ENCODE measurements at regions of chr15 and their contacts with region 1.

Region 1: GRCh38 chr15:70140543-70141375 is 43.0 kb upstream of the TLE3 start:
- DNase-seq: no peak
- ATAC-seq: peak; percentile 88
- H3K4me3 ChIP-seq: peak overlapping the region; percentile 55
- H3K27ac ChIP-seq: peak overlapping the region; percentile 78
- H3K4me1 ChIP-seq: peaks cover 28% of the 10 kb centered on the region
- H3K27me3 ChIP-seq: no peaks in the 10 kb centered on the region
- CTCF ChIP-seq: no peak
- EP300 ChIP-seq: peak in 1 of 2 experiments; percentile 37; a peak in 1 of 4 replicates
- POLR2A ChIP-seq: no peak
- RAD21 ChIP-seq: no peak

Region 2: DNA sequence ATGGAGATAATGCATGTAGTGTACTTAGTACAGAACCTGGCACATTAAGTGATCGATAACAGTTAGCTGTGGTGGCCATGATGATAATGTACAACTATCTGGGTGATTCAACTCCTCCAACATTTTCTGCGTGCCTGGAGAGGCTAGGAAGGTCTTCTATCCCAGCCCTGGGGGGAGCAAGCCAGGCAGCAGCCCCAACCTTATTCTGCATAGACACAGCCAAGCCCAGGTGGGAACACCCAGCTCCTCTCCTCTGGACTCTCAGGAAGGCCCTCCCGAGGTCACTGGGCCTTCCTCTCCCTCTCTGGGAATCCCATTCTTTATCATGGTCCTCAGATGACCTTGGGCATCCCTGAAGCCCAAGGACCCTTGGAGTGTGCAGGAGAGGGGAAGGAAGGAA is 37.9 kb before region 1 on chr15:
- CTCF ChIA-PET with region 1: interaction called, 6 read pairs
- POLR2A ChIA-PET with region 1: interaction called, 10 read pairs
- RAD21 ChIA-PET with region 1: interaction called, 34 read pairs
- SMC1A ChIA-PET with region 1: interaction called, 8 read pairs
- in situ Hi-C with region 1: no loop called
- intact Hi-C with region 1: loop called (anchors 5 kb)
- DNase-seq: no peak
- ATAC-seq: no peak
- H3K4me3 ChIP-seq: no peak overlapping the region
- H3K27ac ChIP-seq: no peak overlapping the region
- H3K4me1 ChIP-seq: peaks cover 24% of the 10 kb centered on the region
- H3K27me3 ChIP-seq: peaks cover 3 to 14% of the 10 kb centered on the region in 2 experiments; a peak in 3 of 4 replicates
- CTCF ChIP-seq: no peak
- EP300 ChIP-seq: no peak
- POLR2A ChIP-seq: no peak
- RAD21 ChIP-seq: no peak

Region 3: GRCh38 chr15:70121624-70122297 is 19.0 kb before region 1 on chr15:
- CTCF ChIA-PET with region 1: interaction called, 3 read pairs
- POLR2A ChIA-PET with region 1: interaction called, 14 read pairs
- RAD21 ChIA-PET with region 1: interaction called, 51 read pairs
- SMC1A ChIA-PET with region 1: interaction called, 30 read pairs
- in situ Hi-C with region 1: no loop called
- intact Hi-C with region 1: no loop called
- DNase-seq: no peak
- ATAC-seq: no peak
- H3K4me3 ChIP-seq: no peak overlapping the region
- H3K27ac ChIP-seq: no peak overlapping the region
- H3K4me1 ChIP-seq: peaks cover 5% of the 10 kb centered on the region; the same call in 1 of the 2 replicates
- H3K27me3 ChIP-seq: no peaks in the 10 kb centered on the region
- CTCF ChIP-seq: 0 out of 6 replicates have a peak, but pooled peaks of 2 of the 3 experiments have one; percentile 5 to 9
- EP300 ChIP-seq: no peak
- POLR2A ChIP-seq: no peak
- RAD21 ChIP-seq: 0 out of 2 replicates have a peak, but pooled peaks have one; percentile 22

Region 4: GRCh38 chr15:70127288-70127746 is 13.4 kb before region 1 on chr15:
- CTCF ChIA-PET with region 1: interaction called, 5 read pairs
- POLR2A ChIA-PET with region 1: interaction called, 14 read pairs
- RAD21 ChIA-PET with region 1: interaction called, 51 read pairs
- SMC1A ChIA-PET with region 1: interaction called, 30 read pairs
- in situ Hi-C with region 1: no loop called
- intact Hi-C with region 1: no loop called
- DNase-seq: no peak
- ATAC-seq: peak; percentile 19
- H3K4me3 ChIP-seq: no peak overlapping the region
- H3K27ac ChIP-seq: no peak overlapping the region
- H3K4me1 ChIP-seq: peaks cover 9% of the 10 kb centered on the region; the same call in 1 of the 2 replicates
- H3K27me3 ChIP-seq: no peaks in the 10 kb centered on the region; a peak in 1 of 4 replicates
- CTCF ChIP-seq: no peak
- EP300 ChIP-seq: no peak
- POLR2A ChIP-seq: no peak
- RAD21 ChIP-seq: no peak

Region 5: GRCh38 chr15:70196314-70197291 is 55.8 kb after region 1 on chr15:
- CTCF ChIA-PET with region 1: interaction called, 3 read pairs
- POLR2A ChIA-PET with region 1: no interaction called
- RAD21 ChIA-PET with region 1: interaction called, 10 read pairs
- SMC1A ChIA-PET with region 1: no interaction called
- in situ Hi-C with region 1: no loop called
- intact Hi-C with region 1: no loop called
- DNase-seq: peak; percentile 90
- ATAC-seq: peak; percentile 95
- H3K4me3 ChIP-seq: no peak overlapping the region
- H3K27ac ChIP-seq: peak overlapping the region; percentile 45
- H3K4me1 ChIP-seq: peaks cover 25% of the 10 kb centered on the region
- H3K27me3 ChIP-seq: no peaks in the 10 kb centered on the region
- CTCF ChIP-seq: no peak
- EP300 ChIP-seq: peak; percentile 63 to 78; a peak in 3 of 4 replicates
- POLR2A ChIP-seq: peak; percentile 39; the same call in 1 of the 2 replicates
- RAD21 ChIP-seq: no peak

Region 6: GRCh38 chr15:70426105-70426821 is 285.5 kb after region 1 on chr15:
- CTCF ChIA-PET with region 1: no interaction called
- POLR2A ChIA-PET with region 1: no interaction called
- RAD21 ChIA-PET with region 1: no interaction called
- SMC1A ChIA-PET with region 1: no interaction called
- in situ Hi-C with region 1: no loop called
- intact Hi-C with region 1: no loop called
- DNase-seq: no peak
- ATAC-seq: no peak
- H3K4me3 ChIP-seq: no peak overlapping the region
- H3K27ac ChIP-seq: no peak overlapping the region
- H3K4me1 ChIP-seq: no peaks in the 10 kb centered on the region; the same call in 1 of the 2 replicates
- H3K27me3 ChIP-seq: peaks cover 2 to 5% of the 10 kb centered on the region in 2 experiments; a peak in 2 of 4 replicates
- CTCF ChIP-seq: no peak
- EP300 ChIP-seq: no peak
- POLR2A ChIP-seq: no peak
- RAD21 ChIP-seq: no peak

Measured in GM12878 (cell line).